Activated B cell treated with CpG ODN at 0.5 μM for 24 hours (primary cell): ENCODE measurements at regions of chr6 and their contacts with region 1.

Region 1: DNA sequence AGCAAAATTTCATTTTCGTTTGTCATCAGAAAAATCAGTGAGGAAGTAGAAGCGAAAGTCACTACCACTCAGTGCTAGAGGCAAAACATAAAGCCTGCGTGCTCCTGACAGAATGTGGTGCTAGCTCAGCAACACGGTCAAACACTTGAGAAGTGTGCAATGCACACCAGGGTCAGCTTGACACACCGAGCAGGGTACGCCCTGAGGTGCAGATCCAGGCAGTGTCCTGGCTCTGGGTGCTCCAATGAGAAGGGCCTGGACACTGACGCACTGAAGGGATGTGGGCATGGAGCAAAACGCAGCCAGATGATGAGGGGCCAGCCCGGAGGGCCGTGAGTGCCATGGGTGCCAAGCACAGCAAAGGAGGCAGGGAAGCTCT is 5.9 kb downstream of the RNASET2 start:
- DNase-seq: peak; percentile 26
- ATAC-seq: peak; percentile 26
- H3K4me3 Mint-ChIP-seq: peak overlapping the region; percentile 84
- H3K27ac Mint-ChIP-seq: peak overlapping the region; percentile 95
- H3K4me1 Mint-ChIP-seq: peaks cover 71% of the 10 kb centered on the region
- H3K27me3 Mint-ChIP-seq: no peaks in the 10 kb centered on the region
- CTCF ChIP-seq: no peak

Region 2: DNA sequence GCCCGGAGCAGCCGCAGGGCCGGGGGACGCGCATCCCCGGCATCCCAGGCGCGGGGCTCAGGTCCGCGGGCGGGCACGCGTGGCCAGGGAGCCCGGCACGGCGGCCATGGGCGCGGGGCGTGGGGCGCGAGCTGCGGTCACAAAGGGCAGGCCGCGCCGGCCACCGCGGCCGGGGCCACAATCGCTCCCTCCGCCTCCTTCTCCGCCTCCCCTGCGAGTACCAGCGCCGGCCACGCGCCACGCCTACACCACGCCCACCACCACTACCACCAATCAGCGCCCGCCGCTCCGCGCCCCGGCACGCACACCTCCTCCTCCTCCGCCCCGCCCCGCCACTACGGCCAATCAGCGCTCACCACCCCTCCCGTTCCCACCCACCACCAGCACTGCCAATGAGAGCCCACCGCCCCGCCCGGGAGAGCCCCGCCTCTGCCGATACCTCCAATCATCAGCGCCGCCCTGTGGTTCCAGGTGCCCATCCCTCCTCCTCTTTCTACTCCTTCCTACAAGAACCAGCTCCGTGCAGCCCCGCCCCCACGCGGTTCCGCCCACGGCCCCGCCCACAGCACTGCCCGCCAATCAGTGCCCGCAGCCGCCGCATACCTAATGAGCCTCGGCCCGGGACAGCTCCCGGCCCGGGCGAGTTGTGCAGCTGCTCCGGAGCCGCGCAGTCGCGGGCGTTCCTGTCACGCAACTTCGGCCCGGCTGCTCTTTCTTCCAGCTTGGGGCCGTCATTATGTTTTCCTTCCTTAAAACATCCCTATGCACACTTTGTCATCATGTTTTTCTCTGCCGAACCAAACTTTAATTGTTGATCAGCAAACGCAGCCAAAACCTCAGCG is 323.2 kb before region 1 on chr6 and contains the start of gene RPS6KA2:
- CTCF ChIA-PET with region 1: no interaction called
- POLR2A ChIA-PET with region 1: interaction called, 5 read pairs
- intact Hi-C with region 1: loop called (anchors 1 kb)
- DNase-seq: peak; percentile 100
- ATAC-seq: peak; percentile 93
- H3K4me3 Mint-ChIP-seq: peak within 1 kb of the TSS; percentile 91
- H3K27ac Mint-ChIP-seq: peak within 1 kb of the TSS; percentile 91
- H3K4me1 Mint-ChIP-seq: peaks cover 22% of the 10 kb centered on the region
- H3K27me3 Mint-ChIP-seq: peaks cover 32% of the 10 kb centered on the region
- CTCF ChIP-seq: no peak
- total RNA-seq, gene RPS6KA2: 13.9 and 14.4 TPM in 2 replicates

Region 3: DNA sequence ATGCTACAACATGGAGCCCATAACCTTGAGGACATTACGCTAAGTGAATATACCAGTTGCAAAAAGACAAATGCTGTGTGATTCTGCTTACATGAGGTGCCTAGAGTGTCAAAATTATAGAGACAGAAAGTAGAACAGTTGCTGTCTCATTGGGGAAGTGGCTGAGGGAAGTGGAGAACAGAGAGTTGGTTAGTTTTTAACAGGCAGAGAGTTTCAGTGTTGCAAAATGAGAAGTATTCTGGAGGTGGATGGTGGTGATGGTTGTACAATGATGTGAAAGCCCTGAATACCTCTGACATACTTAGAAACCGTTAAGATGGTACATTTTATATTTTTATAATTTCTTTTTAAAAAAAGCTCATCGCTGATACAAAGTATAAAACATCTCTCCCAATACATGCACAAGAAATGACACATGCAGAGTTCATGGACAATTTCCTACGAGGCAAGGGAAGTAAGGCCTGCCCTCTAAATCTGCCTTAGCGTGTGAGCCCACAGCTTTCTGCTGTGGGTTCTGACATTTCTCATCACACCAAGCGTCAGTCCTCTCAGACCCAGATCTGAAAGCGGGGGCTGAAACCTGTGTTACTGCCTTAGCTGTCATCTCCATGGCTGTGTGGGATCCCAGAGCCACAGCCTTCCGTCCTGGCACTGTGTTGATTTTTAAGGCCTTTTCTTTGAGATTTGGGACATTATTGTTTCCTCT is 120.1 kb before region 1 on chr6:
- CTCF ChIA-PET with region 1: no interaction called
- POLR2A ChIA-PET with region 1: no interaction called
- intact Hi-C with region 1: loop called (anchors 1 kb)
- DNase-seq: no peak
- ATAC-seq: peak; percentile 88
- H3K4me3 Mint-ChIP-seq: peak overlapping the region; percentile 3
- H3K27ac Mint-ChIP-seq: peak overlapping the region; percentile 70
- H3K4me1 Mint-ChIP-seq: peaks cover 31% of the 10 kb centered on the region
- H3K27me3 Mint-ChIP-seq: no peaks in the 10 kb centered on the region
- CTCF ChIP-seq: no peak

Region 4: DNA sequence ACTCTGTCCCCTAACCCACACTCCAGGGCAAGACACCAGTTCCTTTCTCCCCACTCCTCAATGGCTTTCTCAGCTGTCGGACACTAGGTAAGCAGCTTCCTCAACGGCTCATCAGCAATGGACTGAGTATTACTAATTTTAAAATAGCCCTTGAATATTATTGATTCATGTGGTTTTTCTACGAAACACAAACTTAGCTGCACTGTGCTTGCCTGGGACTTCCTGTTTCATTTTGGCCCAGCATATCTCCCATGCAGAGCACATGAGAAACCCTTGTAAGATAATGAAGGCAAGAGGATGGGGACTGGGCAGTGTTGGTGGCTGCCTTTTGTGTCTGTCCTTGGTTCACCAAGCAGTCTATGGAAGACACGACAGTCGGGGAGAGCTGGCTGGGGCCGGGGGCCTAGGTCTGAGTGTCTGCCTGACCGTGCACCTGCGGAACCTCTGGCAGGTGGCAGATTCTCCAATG is 43.0 kb before region 1 on chr6:
- CTCF ChIA-PET with region 1: no interaction called
- POLR2A ChIA-PET with region 1: no interaction called
- intact Hi-C with region 1: loop called (anchors 2 kb)
- DNase-seq: no peak
- ATAC-seq: peak; percentile 86
- H3K4me3 Mint-ChIP-seq: peak overlapping the region; percentile 49
- H3K27ac Mint-ChIP-seq: peak overlapping the region; percentile 84
- H3K4me1 Mint-ChIP-seq: peaks cover 63% of the 10 kb centered on the region
- H3K27me3 Mint-ChIP-seq: no peaks in the 10 kb centered on the region
- CTCF ChIP-seq: no peak

Region 5: GRCh38 chr6:166999145-166999883 is 48.9 kb after region 1 on chr6 and contains the start of gene CEP43:
- CTCF ChIA-PET with region 1: no interaction called
- POLR2A ChIA-PET with region 1: interaction called, 8 read pairs
- intact Hi-C with region 1: loop called (anchors 1 kb)
- DNase-seq: peak; percentile 95
- ATAC-seq: peak; percentile 96
- H3K4me3 Mint-ChIP-seq: peak within 1 kb of the TSS; percentile 90
- H3K27ac Mint-ChIP-seq: peak within 1 kb of the TSS; percentile 66
- H3K4me1 Mint-ChIP-seq: peaks cover 29% of the 10 kb centered on the region
- H3K27me3 Mint-ChIP-seq: no peaks in the 10 kb centered on the region
- CTCF ChIP-seq: no peak
- total RNA-seq, gene CEP43: 26.8 and 31.0 TPM in 2 replicates

Region 6: GRCh38 chr6:167141667-167142432 is 191.4 kb after region 1 on chr6:
- CTCF ChIA-PET with region 1: interaction called, 10 read pairs
- POLR2A ChIA-PET with region 1: interaction called, 8 read pairs
- intact Hi-C with region 1: loop called (anchors 1 kb)
- DNase-seq: peak; percentile 62
- ATAC-seq: peak; percentile 73
- H3K4me3 Mint-ChIP-seq: peak overlapping the region; percentile 46
- H3K27ac Mint-ChIP-seq: peak overlapping the region; percentile 79
- H3K4me1 Mint-ChIP-seq: peaks cover 61% of the 10 kb centered on the region
- H3K27me3 Mint-ChIP-seq: no peaks in the 10 kb centered on the region
- CTCF ChIP-seq: no peak